Heart left ventricle (tissue), 16 donors: ENCODE measurements at regions of chr9 and their contacts with region 1.

Region 1: DNA sequence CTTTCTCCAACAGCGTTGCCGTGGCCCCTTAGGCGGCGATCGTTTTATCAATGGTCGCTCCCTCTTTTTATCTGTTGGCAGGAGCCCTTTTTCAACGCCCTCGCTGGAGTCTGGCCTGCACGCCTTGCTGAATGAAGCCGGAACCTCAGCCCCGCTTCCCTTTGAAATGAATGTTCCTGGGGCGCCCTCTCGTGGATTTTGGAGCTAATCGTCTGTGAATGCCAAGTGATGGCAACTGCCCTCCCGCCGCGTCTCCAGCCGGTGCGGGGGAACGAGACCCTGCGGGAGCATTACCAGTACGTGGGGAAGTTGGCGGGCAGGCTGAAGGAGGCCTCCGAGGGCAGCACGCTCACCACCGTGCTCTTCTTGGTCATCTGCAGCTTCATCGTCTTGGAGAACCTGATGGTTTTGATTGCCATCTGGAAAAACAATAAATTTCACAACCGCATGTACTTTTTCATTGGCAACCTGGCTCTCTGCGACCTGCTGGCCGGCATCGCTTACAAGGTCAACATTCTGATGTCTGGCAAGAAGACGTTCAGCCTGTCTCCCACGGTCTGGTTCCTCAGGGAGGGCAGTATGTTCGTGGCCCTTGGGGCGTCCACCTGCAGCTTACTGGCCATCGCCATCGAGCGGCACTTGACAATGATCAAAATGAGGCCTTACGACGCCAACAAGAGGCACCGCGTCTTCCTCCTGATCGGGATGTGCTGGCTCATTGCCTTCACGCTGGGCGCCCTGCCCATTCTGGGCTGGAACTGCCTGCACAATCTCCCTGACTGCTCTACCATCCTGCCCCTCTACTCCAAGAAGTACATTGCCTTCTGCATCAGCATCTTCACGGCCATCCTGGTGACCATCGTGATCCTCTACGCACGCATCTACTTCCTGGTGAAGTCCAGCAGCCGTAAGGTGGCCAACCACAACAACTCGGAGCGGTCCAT is 10.0 kb downstream of the S1PR3 start:
- DNase-seq: peak; percentile 86 to 94 (median 91)
- ATAC-seq: peak; percentile 52 to 77 (median 66)
- H3K4me3 ChIP-seq: peak overlapping the region in 4 of 12 donors; percentile 1 to 34 (median 22)
- H3K27ac ChIP-seq: peak overlapping the region in 9 of 12 donors; percentile 5 to 74 (median 45)
- H3K4me1 ChIP-seq: peaks cover 0 to 53% (median 29%) of the 10 kb centered on the region in 12 donors
- H3K27me3 ChIP-seq: no peaks in the 10 kb centered on the region
- CTCF ChIP-seq: peak; percentile 58 to 92 (median 81)
- POLR2A ChIP-seq: no peak

Region 2: GRCh38 chr9:88076286-88077090 is 924.8 kb before region 1 on chr9:
- intact Hi-C with region 1: loop called in 1 of 10 experiments (anchors 10 kb)
- DNase-seq: peak; percentile 56 to 86 (median 80)
- ATAC-seq: peak; percentile 64 to 92 (median 90)
- H3K4me3 ChIP-seq: peak overlapping the region; percentile 11 to 69 (median 56)
- H3K27ac ChIP-seq: peak overlapping the region in 10 of 12 donors; percentile 0 to 75 (median 46)
- H3K4me1 ChIP-seq: peaks cover 0 to 16% (median 7%) of the 10 kb centered on the region in 12 donors
- H3K27me3 ChIP-seq: peaks cover 0 to 26% (median 3%) of the 10 kb centered on the region in 9 donors
- CTCF ChIP-seq: peak in 3 of 12 donors; percentile 13 to 34 (median 19)
- POLR2A ChIP-seq: no peak

Region 3: GRCh38 chr9:88399966-88400365 is 601.3 kb before region 1 on chr9:
- intact Hi-C with region 1: loop called in 1 of 10 experiments (anchors 10 kb)
- DNase-seq: no peak
- ATAC-seq: peak in 1 of 4 donors; percentile 19
- H3K4me3 ChIP-seq: no peak overlapping the region
- H3K27ac ChIP-seq: no peak overlapping the region
- H3K4me1 ChIP-seq: peaks cover 0 to 31% (median 14%) of the 10 kb centered on the region in 12 donors
- H3K27me3 ChIP-seq: no peaks in the 10 kb centered on the region
- CTCF ChIP-seq: no peak
- POLR2A ChIP-seq: no peak

Region 4: DNA sequence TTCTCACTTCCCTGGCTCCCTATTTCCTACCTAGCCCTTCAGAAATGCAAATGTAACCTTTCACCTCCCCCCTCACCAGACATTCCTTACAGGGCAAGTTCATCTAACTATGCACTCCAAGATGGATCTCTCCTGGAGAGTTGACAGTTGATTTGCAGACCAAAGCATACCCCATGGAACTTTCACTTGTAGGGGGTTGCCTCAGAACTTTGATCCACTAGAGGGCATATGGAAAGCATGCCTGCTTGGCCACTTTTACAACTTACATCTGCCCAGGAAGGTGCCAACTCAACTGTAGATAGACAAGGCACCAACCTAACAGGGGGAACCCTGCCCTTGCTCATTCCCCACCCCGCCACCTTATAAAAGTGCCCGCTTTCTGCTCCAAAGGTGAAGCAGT is 278.5 kb before region 1 on chr9:
- intact Hi-C with region 1: loop called in 6 of 10 experiments (anchors 2 to 10 kb)
- DNase-seq: no peak
- ATAC-seq: peak in 3 of 4 donors; percentile 53 to 75 (median 68)
- H3K4me3 ChIP-seq: no peak overlapping the region
- H3K27ac ChIP-seq: no peak overlapping the region
- H3K4me1 ChIP-seq: peaks cover 0 to 8% (median 0%) of the 10 kb centered on the region in 12 donors
- H3K27me3 ChIP-seq: peaks cover 0 to 4% (median 0%) of the 10 kb centered on the region in 9 donors
- CTCF ChIP-seq: peak in 11 of 12 donors; percentile 17 to 51 (median 38)
- POLR2A ChIP-seq: no peak

Region 5: DNA sequence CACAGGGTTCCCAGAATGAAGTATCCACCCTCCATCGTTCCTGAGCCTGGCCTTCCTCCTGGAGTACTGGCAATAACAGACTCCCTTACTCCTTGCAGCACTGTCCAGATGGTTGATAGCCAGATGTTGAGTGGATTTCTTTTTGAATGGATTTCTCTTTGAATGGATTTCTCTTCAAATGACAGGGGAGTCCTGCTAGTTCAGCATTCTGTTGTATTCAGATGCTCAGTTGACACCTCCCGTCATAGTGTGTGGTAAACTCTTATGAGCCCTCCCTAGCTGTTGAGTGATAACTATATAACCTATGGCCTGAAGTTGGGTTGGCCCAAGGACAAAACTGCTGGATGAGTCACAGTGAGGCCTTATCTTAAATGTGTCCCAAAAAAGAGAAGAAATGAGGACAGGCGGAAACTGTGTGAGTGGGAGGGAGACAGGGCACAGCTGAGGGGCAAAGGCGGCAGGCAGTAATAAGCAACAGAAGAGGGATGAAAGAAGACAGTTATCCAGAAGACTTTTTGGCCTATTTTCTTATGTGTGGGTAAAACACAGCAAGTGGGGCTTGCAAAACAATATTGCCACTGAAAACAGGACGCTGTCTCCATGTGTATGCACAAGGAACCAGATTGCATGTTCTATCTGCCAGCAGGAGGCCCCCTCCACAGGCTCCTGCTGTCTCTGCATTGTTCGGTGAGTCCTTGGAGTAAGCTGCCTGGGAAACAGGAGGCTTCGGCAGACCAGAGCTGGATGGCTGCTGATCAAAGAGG is 219.4 kb before region 1 on chr9:
- intact Hi-C with region 1: loop called in 5 of 10 experiments (anchors 2 to 10 kb)
- DNase-seq: peak in 4 of 5 donors; percentile 45 to 69 (median 60)
- ATAC-seq: peak; percentile 59 to 84 (median 79)
- H3K4me3 ChIP-seq: no peak overlapping the region
- H3K27ac ChIP-seq: peak overlapping the region; percentile 1 to 72 (median 52)
- H3K4me1 ChIP-seq: peaks cover 0 to 43% (median 27%) of the 10 kb centered on the region in 12 donors
- H3K27me3 ChIP-seq: no peaks in the 10 kb centered on the region
- CTCF ChIP-seq: peak; percentile 23 to 66 (median 49)
- POLR2A ChIP-seq: no peak

Region 6: DNA sequence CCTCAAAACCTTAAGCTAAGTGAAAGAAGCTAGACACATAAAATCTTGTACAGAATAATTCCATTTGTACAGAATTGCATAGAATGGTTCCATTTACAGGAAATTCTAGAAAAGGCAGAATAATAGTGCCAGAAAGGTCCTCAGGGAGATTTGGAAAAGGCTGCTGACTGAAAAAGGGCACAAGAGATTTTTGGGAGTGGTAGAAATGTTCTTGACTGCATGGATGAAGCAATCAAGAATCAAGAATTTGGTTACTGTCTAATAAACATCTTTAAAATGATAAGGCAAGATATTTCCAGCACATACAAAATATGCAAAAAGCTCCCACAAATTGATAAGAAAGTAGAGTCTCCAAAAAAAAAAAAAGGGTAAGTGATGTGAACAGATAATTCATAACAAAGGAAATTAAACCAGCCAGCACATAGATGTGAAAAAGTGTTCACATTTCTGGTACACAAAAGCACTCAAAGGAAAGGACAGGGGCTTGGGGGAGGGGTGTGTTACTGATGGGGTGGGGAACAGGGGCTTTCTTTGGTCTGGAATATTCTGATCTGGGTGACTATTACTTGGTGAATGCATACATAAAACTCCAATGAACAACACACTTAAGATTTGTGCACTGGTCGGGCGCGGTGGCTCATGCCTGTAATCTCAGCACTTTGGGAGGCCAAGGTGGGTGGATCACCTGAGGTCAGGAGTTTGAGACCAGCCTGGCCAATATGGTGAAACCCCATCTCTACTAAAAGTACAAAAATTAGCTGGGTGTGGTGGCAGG is 92.1 kb after region 1 on chr9:
- intact Hi-C with region 1: no loop called
- DNase-seq: no peak
- ATAC-seq: no peak
- H3K4me3 ChIP-seq: no peak overlapping the region
- H3K27ac ChIP-seq: no peak overlapping the region
- H3K4me1 ChIP-seq: peaks cover 0 to 5% (median 0%) of the 10 kb centered on the region in 12 donors
- H3K27me3 ChIP-seq: no peaks in the 10 kb centered on the region
- CTCF ChIP-seq: no peak
- POLR2A ChIP-seq: no peak

Region 7: GRCh38 chr9:89278997-89279739 is 277.9 kb after region 1 on chr9:
- intact Hi-C with region 1: loop called in 2 of 10 experiments (anchors 10 kb)
- DNase-seq: no peak
- ATAC-seq: no peak
- H3K4me3 ChIP-seq: no peak overlapping the region
- H3K27ac ChIP-seq: no peak overlapping the region
- H3K4me1 ChIP-seq: peaks cover 0 to 11% (median 0%) of the 10 kb centered on the region in 12 donors
- H3K27me3 ChIP-seq: no peaks in the 10 kb centered on the region
- CTCF ChIP-seq: peak; percentile 52 to 70 (median 62)
- POLR2A ChIP-seq: no peak